ENCODE measurements at regions of chr5 and their contacts with region 1.

Region 1: DNA sequence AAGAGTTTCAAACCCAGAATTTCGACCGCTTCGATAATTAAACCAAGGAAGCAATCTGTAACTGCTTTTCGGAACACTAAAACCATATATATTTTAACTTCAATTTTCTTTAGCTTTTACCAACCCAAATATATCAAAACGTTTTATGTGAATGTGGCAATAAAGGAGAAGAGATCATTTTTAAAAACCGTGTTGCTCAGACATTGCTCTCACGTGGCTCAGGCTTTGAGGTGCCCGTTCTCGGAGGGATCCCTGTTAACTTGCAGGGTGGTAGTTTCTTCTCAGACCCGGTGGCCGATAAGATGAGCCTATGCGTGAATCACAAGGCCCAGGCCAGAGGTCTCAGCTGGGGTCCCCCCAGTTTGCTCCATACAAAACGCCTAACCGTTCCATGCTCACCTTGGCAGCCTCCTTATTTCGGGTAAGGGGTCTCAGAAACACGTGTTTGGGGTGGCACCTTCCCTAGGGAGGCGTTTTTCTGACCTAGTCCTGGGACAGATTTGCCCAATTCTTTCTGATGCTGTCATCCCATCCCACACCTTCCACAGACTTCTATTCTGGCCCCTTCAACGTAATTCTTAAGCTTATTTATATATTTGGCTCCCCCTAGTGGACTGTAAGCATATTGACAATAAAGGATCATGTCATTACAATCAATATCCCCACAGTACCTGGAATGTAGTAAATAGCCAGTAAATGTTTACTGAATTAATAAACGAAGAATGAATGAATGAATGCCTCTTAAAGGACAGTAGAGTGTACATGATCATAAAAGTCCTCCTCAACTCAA is 48.1 kb downstream of the THBS4 start:
- DNase-seq: peak in 1 of 2 donors; percentile 31
- ATAC-seq: peak; percentile 74 to 89 (median 84)
- H3K4me3 ChIP-seq: peak overlapping the region in 9 of 10 donors; percentile 15 to 50 (median 43)
- H3K27ac ChIP-seq: peak overlapping the region in 9 of 10 donors; percentile 37 to 82 (median 66)
- H3K4me1 ChIP-seq: peaks cover 3 to 21% (median 13%) of the 10 kb centered on the region in 9 donors
- H3K27me3 ChIP-seq: no peaks in the 10 kb centered on the region
- CTCF ChIP-seq: peak; percentile 60 to 78 (median 73)

Region 2: DNA sequence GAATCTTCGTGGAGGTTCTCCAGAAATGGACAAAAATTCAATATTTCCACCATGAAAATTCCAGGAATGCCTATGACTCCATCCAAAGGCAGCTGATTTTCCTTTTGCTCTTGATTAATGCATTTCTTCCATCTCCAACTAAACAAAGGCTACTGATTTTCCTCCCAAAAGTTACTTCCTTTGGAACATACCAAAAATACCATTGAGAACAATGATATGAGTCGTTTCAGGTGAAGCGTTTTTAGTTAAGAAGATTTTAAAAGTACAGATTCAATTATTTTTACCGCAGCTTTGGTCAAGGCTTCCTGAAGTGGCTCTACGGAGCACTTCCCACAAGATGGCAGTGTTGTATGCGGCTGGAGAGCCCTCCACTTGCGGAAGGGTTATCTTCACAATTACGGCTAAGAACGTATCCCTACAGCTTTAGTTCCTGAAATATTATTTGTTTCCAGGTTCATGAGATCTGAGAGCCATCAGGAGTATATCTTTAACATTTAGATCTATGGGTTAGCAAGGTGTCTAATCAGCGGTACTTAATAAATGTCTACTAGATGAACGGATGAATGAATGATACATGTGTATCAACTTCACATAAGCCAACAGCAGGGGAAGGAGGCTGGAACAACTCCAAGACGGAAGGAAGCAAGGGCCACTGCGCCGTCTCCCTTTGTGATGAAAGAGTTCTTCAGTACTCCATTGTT is 1062.3 kb before region 1 on chr5:
- intact Hi-C with region 1: loop called in 4 of 10 experiments (anchors 5 to 10 kb)
- DNase-seq: peak; percentile 32 to 36
- ATAC-seq: peak in 7 of 8 donors; percentile 66 to 88 (median 81)
- H3K4me3 ChIP-seq: peak overlapping the region in 6 of 10 donors; percentile 3 to 40 (median 19)
- H3K27ac ChIP-seq: no peak overlapping the region
- H3K4me1 ChIP-seq: peaks cover 0 to 19% (median 8%) of the 10 kb centered on the region in 9 donors
- H3K27me3 ChIP-seq: peaks cover 0 to 17% (median 0%) of the 10 kb centered on the region in 7 donors
- CTCF ChIP-seq: peak; percentile 48 to 91 (median 78)

Region 3: DNA sequence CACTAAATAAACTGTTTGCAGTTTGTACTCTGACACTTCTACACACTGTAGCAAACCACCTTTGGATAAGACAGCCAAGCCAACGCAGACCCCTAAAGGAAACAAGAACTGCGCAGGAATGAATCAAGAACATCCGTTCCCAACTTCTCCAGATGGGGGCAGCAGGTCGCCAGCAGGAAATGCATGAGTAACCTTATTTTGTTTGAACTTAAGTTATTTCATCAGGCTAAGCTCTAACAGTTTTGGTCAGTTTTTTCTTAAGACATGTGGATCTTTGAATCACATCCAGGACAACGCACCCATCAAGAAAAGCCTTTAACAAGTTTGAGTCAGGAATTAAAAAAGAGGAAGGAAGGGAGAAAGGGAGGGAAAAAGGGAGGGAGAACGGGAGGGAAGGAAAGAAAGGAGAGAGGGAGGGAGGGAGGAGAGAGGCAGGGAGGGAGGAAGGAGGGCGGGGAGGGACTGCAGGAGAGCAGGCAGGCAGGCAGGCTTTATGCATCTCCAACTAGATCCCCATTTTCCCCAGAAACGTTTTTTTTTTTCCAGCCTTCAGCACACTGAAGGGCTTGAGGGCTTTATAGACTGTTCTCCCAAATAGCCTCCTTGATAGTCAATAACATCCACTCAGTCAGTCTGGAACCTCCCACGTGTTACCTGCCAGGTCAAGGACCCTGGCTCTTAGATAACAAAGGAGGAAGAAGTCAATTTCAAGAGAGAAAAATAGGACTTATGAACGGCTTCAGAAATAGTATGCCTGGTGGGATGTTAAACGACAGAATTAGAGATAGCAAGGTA is 949.4 kb before region 1 on chr5:
- intact Hi-C with region 1: loop called in 2 of 10 experiments (anchors 5 to 10 kb)
- DNase-seq: peak; percentile 34 to 60
- ATAC-seq: peak; percentile 34 to 82 (median 70)
- H3K4me3 ChIP-seq: peak overlapping the region in 8 of 10 donors; percentile 19 to 49 (median 34)
- H3K27ac ChIP-seq: peak overlapping the region in 5 of 10 donors; percentile 5 to 60 (median 31)
- H3K4me1 ChIP-seq: peaks cover 0 to 13% (median 9%) of the 10 kb centered on the region in 9 donors
- H3K27me3 ChIP-seq: no peaks in the 10 kb centered on the region
- CTCF ChIP-seq: peak; percentile 59 to 77 (median 68)

Region 4: GRCh38 chr5:79552984-79553383 is 530.3 kb before region 1 on chr5:
- intact Hi-C with region 1: loop called in 1 of 10 experiments (anchors 5 kb)
- DNase-seq: no peak
- ATAC-seq: no peak
- H3K4me3 ChIP-seq: no peak overlapping the region
- H3K27ac ChIP-seq: no peak overlapping the region
- H3K4me1 ChIP-seq: peaks cover 0 to 9% (median 0%) of the 10 kb centered on the region in 9 donors
- H3K27me3 ChIP-seq: no peaks in the 10 kb centered on the region
- CTCF ChIP-seq: no peak

Region 5: GRCh38 chr5:79774171-79774854 is 309.0 kb before region 1 on chr5:
- intact Hi-C with region 1: no loop called
- DNase-seq: peak in 1 of 2 donors; percentile 23
- ATAC-seq: peak in 7 of 8 donors; percentile 34 to 68 (median 66)
- H3K4me3 ChIP-seq: no peak overlapping the region
- H3K27ac ChIP-seq: peak overlapping the region in 5 of 10 donors; percentile 17 to 55 (median 44)
- H3K4me1 ChIP-seq: peaks cover 0 to 24% (median 0%) of the 10 kb centered on the region in 9 donors
- H3K27me3 ChIP-seq: no peaks in the 10 kb centered on the region
- CTCF ChIP-seq: peak in 6 of 9 donors; percentile 21 to 44 (median 34)

Region 6: DNA sequence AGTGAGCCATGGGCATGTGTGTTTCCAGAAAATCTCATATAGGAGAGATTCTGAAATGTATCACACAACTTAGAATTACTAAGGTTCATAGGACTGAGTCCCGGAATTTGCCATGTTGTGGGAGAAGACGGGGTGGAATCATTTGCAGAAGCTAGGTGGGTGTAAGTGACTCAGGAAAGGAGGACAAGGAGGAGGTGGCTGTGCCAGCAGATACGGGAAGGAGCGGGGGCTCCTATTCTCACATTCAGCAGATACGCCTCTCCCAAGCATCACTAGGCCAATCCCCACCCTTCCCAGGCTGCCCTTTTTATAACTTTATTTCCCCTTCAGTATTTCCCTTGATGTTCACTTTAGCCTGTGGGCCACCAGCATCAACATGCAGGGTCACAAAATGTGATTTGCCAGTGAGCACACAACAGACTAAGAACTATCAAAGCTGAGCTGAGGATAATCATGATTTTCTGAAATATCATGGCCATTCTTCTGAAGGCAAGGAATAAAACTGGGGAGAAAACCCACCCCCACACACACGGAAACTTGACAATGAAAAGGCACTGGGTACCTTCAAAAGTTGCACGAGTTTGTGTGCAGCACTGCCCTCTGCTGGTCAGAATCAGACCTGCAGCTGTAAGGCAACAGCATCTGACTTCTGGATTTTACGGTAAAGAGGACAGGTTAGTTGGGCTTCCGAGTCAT is 225.4 kb before region 1 on chr5:
- intact Hi-C with region 1: loop called in 8 of 10 experiments (anchors 2 to 10 kb)
- DNase-seq: peak; percentile 76 to 77
- ATAC-seq: peak in 7 of 8 donors; percentile 51 to 72 (median 62)
- H3K4me3 ChIP-seq: no peak overlapping the region
- H3K27ac ChIP-seq: peak overlapping the region in 1 of 10 donors; percentile 6
- H3K4me1 ChIP-seq: peaks cover 0 to 22% (median 3%) of the 10 kb centered on the region in 9 donors
- H3K27me3 ChIP-seq: no peaks in the 10 kb centered on the region
- CTCF ChIP-seq: peak; percentile 93 to 98 (median 96)

Region 7: DNA sequence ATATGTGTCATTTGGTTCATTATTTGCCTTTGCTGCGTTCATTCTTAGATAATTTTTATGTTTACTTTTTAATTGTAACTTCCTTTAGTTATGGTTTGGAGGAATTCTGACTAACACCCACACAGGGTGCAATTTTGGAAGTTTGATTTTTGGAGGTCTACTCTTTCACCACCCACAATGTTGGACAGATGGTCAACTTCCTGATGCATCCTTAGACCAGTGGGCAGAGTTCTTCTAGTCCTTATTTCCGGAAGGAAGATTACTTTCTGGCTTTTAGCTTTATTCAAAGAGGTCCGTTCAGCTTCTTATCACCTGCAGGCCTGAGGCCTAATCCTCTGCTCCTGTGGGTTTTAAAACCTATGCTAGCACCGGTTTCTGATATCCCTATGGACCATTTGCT is 218.9 kb before region 1 on chr5:
- intact Hi-C with region 1: loop called in 8 of 10 experiments (anchors 2 to 10 kb)
- DNase-seq: no peak
- ATAC-seq: peak in 3 of 8 donors; percentile 29 to 65 (median 57)
- H3K4me3 ChIP-seq: no peak overlapping the region
- H3K27ac ChIP-seq: peak overlapping the region in 4 of 10 donors; percentile 0 to 45 (median 23)
- H3K4me1 ChIP-seq: peaks cover 0 to 9% (median 2%) of the 10 kb centered on the region in 9 donors
- H3K27me3 ChIP-seq: no peaks in the 10 kb centered on the region
- CTCF ChIP-seq: no peak

Region 8: GRCh38 chr5:79990598-79991507 is 92.4 kb before region 1 on chr5 and contains the start of gene MTX3:
- intact Hi-C with region 1: loop called in 3 of 10 experiments (anchors 2 to 5 kb)
- DNase-seq: peak; percentile 86 to 87
- ATAC-seq: peak; percentile 93 to 97 (median 96)
- H3K4me3 ChIP-seq: peak within 1 kb of the TSS; percentile 63 to 88 (median 82)
- H3K27ac ChIP-seq: peak within 1 kb of the TSS; percentile 45 to 87 (median 80)
- H3K4me1 ChIP-seq: peaks cover 0 to 27% (median 17%) of the 10 kb centered on the region in 9 donors
- H3K27me3 ChIP-seq: no peaks in the 10 kb centered on the region
- CTCF ChIP-seq: no peak
- total RNA-seq, gene MTX3: 10.0 to 14.5 (median 11.6) TPM

Region 9: GRCh38 chr5:80917631-80918030 is 834.3 kb after region 1 on chr5:
- intact Hi-C with region 1: no loop called
- DNase-seq: no peak
- ATAC-seq: no peak
- H3K4me3 ChIP-seq: no peak overlapping the region
- H3K27ac ChIP-seq: no peak overlapping the region
- H3K4me1 ChIP-seq: peaks cover 0 to 8% (median 0%) of the 10 kb centered on the region in 9 donors
- H3K27me3 ChIP-seq: no peaks in the 10 kb centered on the region
- CTCF ChIP-seq: no peak